ENCODE measurements at regions of chr22 and their contacts with region 1.

Region 1: DNA sequence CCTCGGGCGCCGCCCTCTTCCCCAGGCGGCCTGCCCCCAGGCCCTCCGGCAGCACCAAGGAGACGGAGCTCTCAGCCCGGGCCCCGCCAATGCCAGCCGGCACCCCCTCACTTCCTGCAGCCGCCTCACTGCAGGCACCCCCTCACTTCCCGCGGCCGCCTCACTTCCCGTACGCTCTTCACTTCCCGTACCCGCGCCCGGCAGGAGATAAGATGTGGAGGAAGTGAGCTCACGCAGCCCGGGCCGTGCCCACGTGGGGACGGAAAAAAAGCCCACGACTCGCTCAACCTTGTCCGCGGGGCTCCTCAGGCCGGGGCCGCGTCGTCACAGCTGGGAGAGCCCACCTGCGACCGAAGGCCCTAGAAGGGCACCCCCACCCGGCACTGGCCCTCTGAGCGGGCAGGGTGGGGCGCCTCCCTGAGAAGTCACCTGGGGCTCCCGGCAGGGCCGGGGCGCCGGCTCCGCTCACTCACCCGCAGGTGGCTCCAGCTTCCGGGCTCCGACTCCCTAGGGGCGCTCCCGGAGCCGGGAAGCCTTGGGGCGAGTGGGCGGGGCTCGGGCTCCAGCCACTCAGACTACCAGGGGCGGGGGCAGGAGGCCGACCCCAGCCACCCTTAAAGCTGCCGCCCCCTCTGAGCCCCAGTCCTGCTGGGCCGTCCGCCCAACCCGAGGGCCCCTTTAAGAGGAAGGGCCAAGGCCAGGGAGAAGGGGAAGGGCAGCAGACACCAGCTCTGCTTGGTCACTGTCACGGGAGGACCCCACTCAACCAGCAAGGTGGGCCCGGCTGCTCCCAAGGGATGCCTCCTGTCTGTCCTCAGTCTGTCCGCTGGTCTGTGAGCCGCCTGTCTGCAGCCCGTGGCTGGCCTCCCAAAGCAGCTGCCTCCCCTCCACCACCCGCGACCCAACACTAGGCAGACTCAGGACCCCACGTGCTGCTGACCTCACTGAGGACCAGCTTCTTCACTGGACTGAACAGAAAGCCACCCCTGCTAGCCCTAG is 31.4 kb downstream of the PISD start:
- DNase-seq: peak; percentile 89
- ATAC-seq: peak; percentile 81

Region 2: GRCh38 chr22:31561238-31561887 is 69.3 kb before region 1 on chr22:
- intact Hi-C with region 1: loop called (anchors 2 kb)
- DNase-seq: peak; percentile 76
- ATAC-seq: peak; percentile 97

Region 3: DNA sequence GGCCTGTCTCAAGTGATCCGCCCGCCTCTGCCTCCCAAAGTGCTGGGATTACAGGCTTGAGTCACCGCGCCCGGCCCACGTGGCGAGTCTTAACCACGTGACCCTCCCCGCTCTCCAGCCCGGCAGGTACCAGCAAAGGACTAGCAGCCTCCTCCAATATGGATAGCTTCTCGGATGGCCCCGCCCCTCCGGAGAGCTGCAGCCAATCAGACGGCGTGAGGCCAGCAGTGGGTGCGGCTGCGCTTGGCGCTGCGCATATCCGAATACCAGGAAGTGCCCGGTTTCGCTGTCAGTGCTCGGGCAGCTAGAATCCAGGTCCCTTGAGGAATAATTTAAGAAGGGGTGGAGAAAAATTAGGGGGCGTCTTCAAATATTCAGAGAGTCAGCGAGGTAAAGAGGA is 46.1 kb after region 1 on chr22:
- intact Hi-C with region 1: no loop called
- DNase-seq: peak; percentile 96
- ATAC-seq: peak; percentile 99

Measured in left ventricle myocardium superior (tissue), 1 donor.